Panc1 (cell line): ENCODE measurements at regions of chr15 and their contacts with region 1.

Region 1: DNA sequence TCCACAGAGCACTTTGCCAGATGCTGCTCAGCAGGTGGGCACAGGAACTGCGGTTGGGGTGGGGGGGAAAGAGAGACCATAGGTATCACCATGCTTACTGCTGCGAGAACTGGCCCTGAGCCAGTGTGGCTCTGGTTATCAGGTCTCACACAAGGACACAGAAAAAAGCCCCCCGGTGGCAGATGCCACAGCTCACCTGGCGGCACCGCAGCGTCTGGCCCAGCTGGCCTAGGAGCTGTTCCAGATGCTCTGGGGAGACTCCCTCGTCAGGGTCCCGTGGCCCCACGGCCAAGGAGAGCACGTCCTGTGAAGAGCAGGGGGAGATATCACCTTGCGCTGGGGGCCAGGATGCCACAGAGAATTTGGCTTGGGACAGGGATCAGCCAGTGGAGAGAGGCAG is 10.8 kb downstream of the CDAN1 start:
- DNase-seq: no peak
- ATAC-seq: no peak
- H3K4me3 ChIP-seq: no peak overlapping the region
- H3K27ac ChIP-seq: no peak overlapping the region
- H3K4me1 ChIP-seq: no peaks in the 10 kb centered on the region
- H3K27me3 ChIP-seq: no peaks in the 10 kb centered on the region
- CTCF ChIP-seq: no peak

Region 2: DNA sequence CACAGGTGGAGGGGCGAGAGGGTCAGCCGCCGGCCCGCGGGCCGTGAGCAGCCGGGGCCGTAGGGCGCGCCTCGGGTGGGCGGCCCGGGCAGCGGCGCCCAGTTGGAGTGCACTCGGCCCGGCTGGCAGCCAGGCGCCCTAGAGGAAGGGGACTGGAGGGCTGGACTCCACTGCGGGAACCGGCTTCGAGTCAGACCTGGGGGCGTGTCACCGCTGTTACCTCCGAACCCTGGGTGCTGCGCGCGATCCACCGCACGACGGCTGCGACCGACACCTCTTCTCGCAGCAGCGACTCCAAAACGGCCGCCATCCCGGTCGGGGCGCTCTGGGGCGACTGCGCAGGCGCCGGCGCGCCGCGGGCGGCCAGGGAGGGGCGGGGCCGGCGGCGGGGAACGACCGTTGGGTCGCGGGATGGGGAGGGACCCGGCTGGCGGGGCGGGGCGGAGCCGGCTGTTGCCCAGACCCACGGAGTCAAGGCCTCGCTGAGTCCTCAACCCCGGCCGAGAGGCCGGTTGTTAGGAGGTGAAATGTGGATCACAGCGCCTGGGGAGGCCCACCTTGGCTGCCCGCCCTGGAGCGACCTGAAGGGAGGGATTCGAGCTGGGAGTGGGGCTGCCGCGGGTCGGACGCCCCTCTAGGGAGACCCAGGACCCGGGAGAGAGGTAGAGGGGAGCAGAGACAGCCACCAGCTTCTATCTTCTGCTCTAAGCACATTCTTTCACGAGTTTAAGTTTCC is 10.8 kb after region 1 on chr15 and contains the start of gene CDAN1:
- CTCF ChIA-PET with region 1: no interaction called
- POLR2A ChIA-PET with region 1: no interaction called
- in situ Hi-C with region 1: no loop called
- intact Hi-C with region 1: no loop called
- DNase-seq: peak; percentile 41
- ATAC-seq: peak; percentile 96
- H3K4me3 ChIP-seq: peak within 1 kb of the TSS; percentile 77 to 78
- H3K27ac ChIP-seq: peak within 1 kb of the TSS; percentile 87
- H3K4me1 ChIP-seq: 0 out of 2 replicates have a peak, but pooled peaks cover 11% of the 10 kb centered on the region
- H3K27me3 ChIP-seq: no peaks in the 10 kb centered on the region
- CTCF ChIP-seq: no peak
- total RNA-seq, gene CDAN1: 41.1 TPM

Region 3: GRCh38 chr15:42933886-42934667 is 208.0 kb after region 1 on chr15:
- CTCF ChIA-PET with region 1: interaction called, 10 read pairs
- POLR2A ChIA-PET with region 1: no interaction called
- in situ Hi-C with region 1: no loop called
- intact Hi-C with region 1: no loop called
- DNase-seq: no peak
- ATAC-seq: no peak
- H3K4me3 ChIP-seq: no peak overlapping the region
- H3K27ac ChIP-seq: no peak overlapping the region
- H3K4me1 ChIP-seq: no peaks in the 10 kb centered on the region
- H3K27me3 ChIP-seq: no peaks in the 10 kb centered on the region
- CTCF ChIP-seq: no peak